Cardiac septum (tissue), 1 donor: ENCODE measurements at regions of chr1 and their contacts with region 1.

Region 1: GRCh38 chr1:202286622-202287097 is 55.1 kb downstream of the UBE2T start:
- DNase-seq: no peak

Region 2: DNA sequence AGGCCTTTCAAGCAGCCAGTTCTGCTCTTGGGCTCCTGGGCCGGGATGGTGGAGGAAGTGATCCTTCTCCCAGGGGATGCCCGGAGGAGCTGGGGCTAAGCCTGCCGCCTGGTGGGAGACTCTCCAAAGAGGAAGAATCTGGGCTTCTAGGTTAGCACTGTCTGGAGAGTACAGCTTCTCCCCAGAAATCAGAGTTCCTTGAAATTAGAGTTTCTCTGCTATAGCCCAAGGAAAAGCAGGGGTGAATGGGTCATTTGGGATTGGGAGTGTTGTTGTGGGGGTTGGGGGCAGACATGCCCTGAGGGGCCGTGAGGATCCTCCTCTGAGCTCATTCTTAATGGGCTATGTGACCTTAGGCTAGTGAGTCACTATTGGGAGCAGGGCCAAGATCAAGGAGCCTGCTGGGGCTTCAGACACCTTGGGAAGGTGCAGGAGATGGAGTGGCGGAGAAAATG is 86.5 kb before region 1 on chr1:
- intact Hi-C with region 1: loop called (anchors 5 kb)
- DNase-seq: no peak